Heart right ventricle (tissue), 16 donors: ENCODE measurements at regions of chr12 and their contacts with region 1.

Region 1: DNA sequence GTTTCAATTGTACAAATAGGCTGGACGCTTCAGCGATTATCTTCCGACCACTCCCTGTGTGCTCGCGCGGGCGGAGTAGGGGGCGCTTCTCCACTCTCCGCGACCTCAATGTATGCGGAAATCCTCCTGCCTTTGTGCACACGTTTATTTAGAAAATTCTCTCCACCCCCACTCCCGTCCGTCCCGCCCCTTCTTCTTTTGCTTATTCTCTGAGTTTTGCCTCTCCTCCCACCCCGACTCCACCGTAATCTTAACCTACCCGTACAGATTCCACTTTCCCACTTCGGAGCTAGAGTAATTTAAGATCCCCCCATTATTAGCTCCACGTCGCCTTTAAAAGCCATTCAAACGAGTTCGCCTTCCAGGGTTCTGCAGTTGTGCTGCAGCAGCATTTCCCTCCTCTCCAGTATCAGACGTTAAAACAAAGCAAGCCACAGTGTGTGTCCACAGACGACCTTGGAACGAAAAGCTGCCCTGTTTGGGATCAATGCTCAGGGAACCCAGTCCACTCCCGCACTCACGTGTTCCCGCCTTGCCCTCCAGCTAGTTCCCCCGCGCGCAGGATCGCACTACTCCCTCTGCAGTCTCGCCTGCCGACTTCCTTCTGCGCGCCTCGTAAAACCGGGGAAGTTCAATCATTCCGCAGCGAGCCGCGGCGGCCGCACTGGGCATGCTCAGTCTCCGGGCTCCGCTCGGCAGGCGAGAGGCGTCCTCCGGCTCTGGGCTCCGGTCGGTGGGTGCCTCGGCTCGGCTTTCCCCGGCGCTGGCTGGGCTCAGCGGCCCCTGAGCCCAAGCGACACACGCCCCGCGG is at the start of gene ANO6:
- DNase-seq: peak; percentile 88 to 89
- ATAC-seq: peak; percentile 90 to 96 (median 95)
- H3K4me3 ChIP-seq: peak within 1 kb of the TSS; percentile 67 to 98 (median 90)
- H3K27ac ChIP-seq: peak within 1 kb of the TSS; percentile 91 to 99 (median 94)
- H3K4me1 ChIP-seq: peaks cover 0 to 49% (median 32%) of the 10 kb centered on the region in 9 donors
- H3K27me3 ChIP-seq: no peaks in the 10 kb centered on the region
- CTCF ChIP-seq: peak in 4 of 9 donors; percentile 23 to 55 (median 30)
- total RNA-seq, gene ANO6: 35.8 to 52.2 (median 41.9) TPM

Region 2: GRCh38 chr12:45170456-45171042 is 45.1 kb before region 1 on chr12:
- intact Hi-C with region 1: loop called in 2 of 10 experiments (anchors 2 to 5 kb)
- DNase-seq: peak; percentile 72 to 86
- ATAC-seq: peak in 7 of 8 donors; percentile 55 to 86 (median 77)
- H3K4me3 ChIP-seq: no peak overlapping the region
- H3K27ac ChIP-seq: no peak overlapping the region
- H3K4me1 ChIP-seq: peaks cover 0 to 14% (median 0%) of the 10 kb centered on the region in 9 donors
- H3K27me3 ChIP-seq: no peaks in the 10 kb centered on the region
- CTCF ChIP-seq: peak; percentile 71 to 95 (median 91)

Region 3: DNA sequence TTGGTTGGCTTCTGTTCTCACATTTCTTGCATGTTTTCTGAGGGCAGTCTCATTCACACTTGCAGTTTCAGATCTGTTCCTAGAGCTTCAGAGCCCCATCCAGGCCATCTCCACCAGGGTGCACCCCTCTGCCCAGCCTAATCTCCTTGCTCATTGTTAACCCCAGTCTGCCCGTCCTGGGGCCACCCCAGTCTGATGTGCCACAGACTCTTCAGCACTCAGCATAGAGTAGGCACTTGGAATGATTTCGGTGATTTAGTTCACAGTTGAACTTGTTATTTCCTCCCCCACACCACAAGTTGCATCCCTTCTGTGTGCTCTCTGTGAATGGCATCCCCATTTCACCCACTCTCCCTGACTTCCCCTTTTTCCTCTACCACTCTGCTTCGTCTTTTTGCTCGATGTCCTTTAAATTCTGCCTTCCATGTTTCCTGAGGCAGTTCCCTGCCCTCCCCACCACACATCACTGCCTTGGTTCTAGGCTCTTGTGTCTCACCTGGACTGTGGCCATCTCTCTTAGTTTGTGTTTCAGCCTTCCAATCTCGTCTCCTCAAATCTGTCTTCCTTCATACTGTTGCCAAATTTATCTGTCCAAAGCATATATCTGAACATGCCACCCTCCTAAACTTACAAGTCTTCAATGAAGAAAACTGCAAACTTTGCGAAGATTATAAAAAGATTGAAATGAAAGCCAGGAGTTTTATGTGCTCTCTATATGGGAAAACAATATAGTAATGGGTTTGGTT is 41.7 kb after region 1 on chr12:
- intact Hi-C with region 1: loop called in 2 of 10 experiments (anchors 5 kb)
- DNase-seq: no peak
- ATAC-seq: peak in 4 of 8 donors; percentile 22 to 37 (median 34)
- H3K4me3 ChIP-seq: no peak overlapping the region
- H3K27ac ChIP-seq: no peak overlapping the region
- H3K4me1 ChIP-seq: peaks cover 0 to 63% (median 45%) of the 10 kb centered on the region in 9 donors
- H3K27me3 ChIP-seq: no peaks in the 10 kb centered on the region
- CTCF ChIP-seq: no peak

Region 4: GRCh38 chr12:45268672-45269411 is 53.2 kb after region 1 on chr12:
- intact Hi-C with region 1: loop called in 4 of 10 experiments (anchors 2 to 5 kb)
- DNase-seq: peak; percentile 73 to 91
- ATAC-seq: peak; percentile 70 to 88 (median 82)
- H3K4me3 ChIP-seq: peak overlapping the region in 3 of 10 donors; percentile 6 to 18 (median 15)
- H3K27ac ChIP-seq: peak overlapping the region in 8 of 10 donors; percentile 19 to 69 (median 40)
- H3K4me1 ChIP-seq: peaks cover 9 to 87% (median 48%) of the 10 kb centered on the region in 9 donors
- H3K27me3 ChIP-seq: no peaks in the 10 kb centered on the region
- CTCF ChIP-seq: peak in 8 of 9 donors; percentile 30 to 70 (median 52)

Region 5: GRCh38 chr12:45388545-45388944 is 172.9 kb after region 1 on chr12:
- intact Hi-C with region 1: loop called in 4 of 10 experiments (anchors 5 to 10 kb)
- DNase-seq: peak in 1 of 2 donors; percentile 49
- ATAC-seq: peak in 6 of 8 donors; percentile 47 to 77 (median 58)
- H3K4me3 ChIP-seq: no peak overlapping the region
- H3K27ac ChIP-seq: no peak overlapping the region
- H3K4me1 ChIP-seq: peaks cover 0 to 5% (median 0%) of the 10 kb centered on the region in 9 donors
- H3K27me3 ChIP-seq: no peaks in the 10 kb centered on the region
- CTCF ChIP-seq: peak; percentile 11 to 79 (median 61)

Region 6: GRCh38 chr12:45728630-45729232 is 513.1 kb after region 1 on chr12:
- intact Hi-C with region 1: loop called in 1 of 10 experiments (anchors 10 kb)
- DNase-seq: peak; percentile 97 to 98
- ATAC-seq: peak; percentile 79 to 92 (median 84)
- H3K4me3 ChIP-seq: peak overlapping the region; percentile 60 to 95 (median 86)
- H3K27ac ChIP-seq: peak overlapping the region; percentile 94 to 99 (median 98)
- H3K4me1 ChIP-seq: peaks cover 7 to 51% (median 45%) of the 10 kb centered on the region in 9 donors
- H3K27me3 ChIP-seq: no peaks in the 10 kb centered on the region
- CTCF ChIP-seq: peak; percentile 89 to 99 (median 98)